ENCODE measurements at regions of chr9 and their contacts with region 1.

Region 1: DNA sequence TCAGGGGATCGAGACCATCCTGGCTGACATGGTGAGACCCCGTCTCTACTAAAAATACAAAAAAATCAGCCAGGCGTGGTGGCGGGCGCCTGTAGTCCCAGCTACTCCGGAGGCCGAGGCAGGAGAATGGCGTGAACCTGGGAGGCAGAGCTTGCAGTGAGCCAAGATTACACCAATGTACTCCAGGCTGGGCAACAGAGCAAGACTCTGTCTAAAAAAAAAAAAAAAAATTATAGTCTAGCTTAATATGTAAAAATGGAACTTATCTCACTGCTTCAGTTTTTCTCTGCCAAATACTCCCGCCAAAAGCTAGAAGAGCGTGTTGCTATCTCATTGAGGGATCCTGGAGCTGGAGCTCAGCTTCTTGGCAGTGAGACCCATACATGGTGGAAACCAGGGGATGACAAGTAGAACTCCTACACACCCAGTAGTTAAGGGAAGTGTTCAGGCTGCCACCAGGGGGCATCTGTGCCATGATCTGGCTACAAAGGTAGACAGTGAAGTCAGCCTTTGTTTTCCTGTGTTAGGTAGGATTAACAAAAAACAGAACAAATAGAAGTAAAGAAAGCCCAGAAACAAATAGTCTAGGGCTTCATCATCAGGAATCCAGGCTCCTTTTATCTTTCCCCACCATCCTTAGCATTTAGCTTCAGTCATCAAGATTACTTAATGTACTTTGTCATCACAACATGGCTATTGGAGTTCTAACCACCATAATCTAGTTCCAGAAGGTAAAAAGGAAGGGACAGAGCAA is 33.6 kb upstream of the GLIPR2 start:
- DNase-seq: peak; percentile 76 to 91
- H3K4me3 ChIP-seq: no peak overlapping the region
- H3K4me1 ChIP-seq: peaks cover 3% of the 10 kb centered on the region
- H3K27me3 ChIP-seq: no peaks in the 10 kb centered on the region

Region 2: GRCh38 chr9:36166101-36166927 is 63.4 kb after region 1 on chr9:
- in situ Hi-C with region 1: loop called (anchors 5 kb)
- DNase-seq: peak; percentile 80 to 89
- H3K4me3 ChIP-seq: peak overlapping the region; percentile 34
- H3K4me1 ChIP-seq: no peaks in the 10 kb centered on the region
- H3K27me3 ChIP-seq: no peaks in the 10 kb centered on the region

Measured in HAP-1 (cell line).